PC-9 (cell line): ENCODE measurements at regions of chr3 and their contacts with region 1.

Region 1: DNA sequence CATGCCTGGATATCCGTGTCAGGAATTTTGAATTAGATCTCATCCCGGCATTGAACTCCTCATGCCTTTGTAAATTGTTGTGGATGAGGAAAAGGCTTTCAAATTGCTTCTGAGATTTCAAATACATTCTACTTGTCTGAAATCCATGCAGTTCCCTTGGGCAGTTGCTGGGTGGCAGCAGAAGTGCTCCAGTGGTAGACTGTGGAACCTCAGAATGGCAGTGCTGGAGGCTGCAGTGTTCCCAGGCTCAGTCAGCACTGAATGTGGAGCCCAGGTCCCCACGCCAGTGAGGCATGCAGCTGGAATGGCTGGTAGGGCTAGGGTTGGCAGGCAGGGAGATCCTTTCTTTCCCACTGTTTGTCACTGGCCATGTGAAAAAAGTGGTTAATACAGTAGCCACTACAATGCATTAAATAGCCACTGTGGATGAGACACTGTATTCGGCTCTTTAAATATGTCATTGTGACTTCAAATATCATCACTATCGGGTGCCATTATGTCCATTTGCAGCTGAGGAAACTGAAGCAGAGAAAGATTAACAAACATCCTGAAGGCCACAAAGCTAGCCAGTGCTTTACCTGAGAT is 98.6 kb downstream of the TPRG1 start:
- DNase-seq: peak; percentile 83 to 86
- H3K4me3 ChIP-seq: no peak overlapping the region
- H3K27ac ChIP-seq: no peak overlapping the region
- H3K4me1 ChIP-seq: no peaks in the 10 kb centered on the region
- H3K27me3 ChIP-seq: no peaks in the 10 kb centered on the region
- CTCF ChIP-seq: peak; percentile 78

Region 2: GRCh38 chr3:189316242-189317019 is 46.1 kb after region 1 on chr3:
- CTCF ChIA-PET with region 1: interaction called, 3 read pairs
- POLR2A ChIA-PET with region 1: interaction called, 3 read pairs
- intact Hi-C with region 1: loop called (anchors 1 kb)
- DNase-seq: peak; percentile 90 to 100
- H3K4me3 ChIP-seq: peak overlapping the region; percentile 1; the same call in 1 of the 2 replicates
- H3K27ac ChIP-seq: peak overlapping the region; percentile 89
- H3K4me1 ChIP-seq: peaks cover 31% of the 10 kb centered on the region
- H3K27me3 ChIP-seq: no peaks in the 10 kb centered on the region
- CTCF ChIP-seq: no peak

Region 3: GRCh38 chr3:189394599-189395121 is 124.3 kb after region 1 on chr3:
- CTCF ChIA-PET with region 1: interaction called, 5 read pairs
- POLR2A ChIA-PET with region 1: interaction called, 3 read pairs
- intact Hi-C with region 1: loop called (anchors 1 kb)
- DNase-seq: no peak
- H3K4me3 ChIP-seq: no peak overlapping the region
- H3K27ac ChIP-seq: peak overlapping the region; percentile 89
- H3K4me1 ChIP-seq: peaks cover 36% of the 10 kb centered on the region
- H3K27me3 ChIP-seq: no peaks in the 10 kb centered on the region
- CTCF ChIP-seq: no peak

Region 4: GRCh38 chr3:189490749-189491148 is 220.4 kb after region 1 on chr3:
- CTCF ChIA-PET with region 1: no interaction called
- POLR2A ChIA-PET with region 1: no interaction called
- intact Hi-C with region 1: loop called (anchors 10 kb)
- DNase-seq: peak in 1 of 2 experiments; percentile 24
- H3K4me3 ChIP-seq: no peak overlapping the region
- H3K27ac ChIP-seq: peak overlapping the region; percentile 8; the same call in 1 of the 2 replicates
- H3K4me1 ChIP-seq: peaks cover 12% of the 10 kb centered on the region
- H3K27me3 ChIP-seq: no peaks in the 10 kb centered on the region
- CTCF ChIP-seq: no peak

Region 5: GRCh38 chr3:189563866-189564563 is 293.7 kb after region 1 on chr3:
- CTCF ChIA-PET with region 1: no interaction called
- POLR2A ChIA-PET with region 1: no interaction called
- intact Hi-C with region 1: loop called (anchors 1 kb)
- DNase-seq: peak; percentile 68 to 92
- H3K4me3 ChIP-seq: no peak overlapping the region
- H3K27ac ChIP-seq: peak overlapping the region; percentile 78
- H3K4me1 ChIP-seq: peaks cover 27% of the 10 kb centered on the region
- H3K27me3 ChIP-seq: no peaks in the 10 kb centered on the region
- CTCF ChIP-seq: no peak